ENCODE measurements at regions of chr4 and their contacts with region 1.

Region 1: DNA sequence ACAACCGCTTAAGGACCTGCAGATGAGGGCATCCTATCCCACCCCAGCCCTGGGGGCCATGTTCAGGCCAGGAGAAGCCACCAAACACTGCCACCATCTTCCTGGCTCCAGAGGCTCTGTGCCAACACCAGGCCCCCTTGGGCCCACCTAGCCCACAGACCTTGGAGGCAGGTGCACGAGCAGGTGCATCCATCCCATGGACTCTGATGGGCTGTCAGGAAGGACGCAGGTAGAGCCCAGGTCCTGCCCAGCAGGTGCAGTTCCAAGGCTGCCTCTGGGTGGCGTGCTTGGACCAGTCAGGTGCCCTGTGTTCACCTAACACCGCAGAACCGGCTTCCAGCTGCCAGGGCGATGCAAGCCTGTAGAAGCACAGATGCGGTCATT is 22.8 kb upstream of the PDE6B start:
- DNase-seq: peak; percentile 61 to 73 (median 67)
- ATAC-seq: peak; percentile 99
- H3K4me3 ChIP-seq: no peak overlapping the region
- H3K27ac ChIP-seq: no peak overlapping the region
- H3K4me1 ChIP-seq: peaks cover 0 to 8% of the 10 kb centered on the region in 2 experiments; a peak in 2 of 5 replicates
- H3K27me3 ChIP-seq: peaks cover 4 to 45% of the 10 kb centered on the region in 2 experiments; a peak in 2 of 5 replicates
- CTCF ChIP-seq: peak; percentile 71 to 84 (median 81)
- EP300 ChIP-seq: no peak
- POLR2A ChIP-seq: no peak
- RAD21 ChIP-seq: peak in 1 of 2 experiments; percentile 66; a peak in 2 of 4 replicates

Region 2: DNA sequence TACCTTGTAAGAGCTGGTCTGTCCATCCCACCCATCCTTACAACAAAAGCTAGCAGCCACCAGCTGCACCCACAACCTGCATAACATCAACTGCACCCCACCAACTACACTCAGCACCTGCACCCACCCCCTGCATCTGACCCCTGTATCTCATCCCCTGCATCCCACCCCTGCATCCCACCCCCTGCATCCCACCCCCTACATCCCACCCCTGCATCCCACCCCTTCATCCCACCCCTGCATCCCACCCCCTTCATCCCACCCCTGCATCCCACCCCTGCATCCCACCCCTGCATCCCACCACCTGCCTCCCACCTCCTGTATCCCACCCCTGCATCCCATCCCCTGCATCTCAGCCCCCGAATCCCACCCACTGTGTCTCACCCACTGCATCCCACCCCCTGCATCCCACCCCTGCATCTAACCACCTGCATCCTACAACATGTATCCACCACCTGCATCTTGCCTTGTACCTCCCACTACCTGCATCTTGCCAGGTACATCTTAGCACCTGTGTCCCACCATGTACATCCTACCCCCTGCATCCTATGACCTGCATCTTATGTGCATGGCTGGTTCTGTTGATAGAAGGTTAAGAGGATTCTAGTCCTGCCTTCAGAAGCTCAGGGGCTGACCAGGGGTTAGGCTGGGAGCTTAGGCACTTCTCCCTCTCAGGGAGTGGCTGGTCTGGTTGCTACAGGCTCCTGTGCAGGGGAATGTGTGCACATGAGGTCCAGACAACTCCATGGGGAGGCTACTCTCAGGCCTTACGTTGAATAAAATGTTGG is 35.8 kb before region 1 on chr4:
- CTCF ChIA-PET with region 1: no interaction called
- POLR2A ChIA-PET with region 1: no interaction called
- in situ Hi-C with region 1: no loop called
- intact Hi-C with region 1: no loop called
- DNase-seq: peak in 3 of 4 experiments; percentile 44 to 52 (median 51)
- ATAC-seq: no peak
- H3K4me3 ChIP-seq: no peak overlapping the region
- H3K27ac ChIP-seq: no peak overlapping the region
- H3K4me1 ChIP-seq: no peaks in the 10 kb centered on the region; a peak in 1 of 5 replicates
- H3K27me3 ChIP-seq: peaks cover 0 to 15% of the 10 kb centered on the region in 2 experiments; a peak in 2 of 5 replicates
- CTCF ChIP-seq: no peak
- EP300 ChIP-seq: no peak
- POLR2A ChIP-seq: no peak
- RAD21 ChIP-seq: no peak

Region 3: DNA sequence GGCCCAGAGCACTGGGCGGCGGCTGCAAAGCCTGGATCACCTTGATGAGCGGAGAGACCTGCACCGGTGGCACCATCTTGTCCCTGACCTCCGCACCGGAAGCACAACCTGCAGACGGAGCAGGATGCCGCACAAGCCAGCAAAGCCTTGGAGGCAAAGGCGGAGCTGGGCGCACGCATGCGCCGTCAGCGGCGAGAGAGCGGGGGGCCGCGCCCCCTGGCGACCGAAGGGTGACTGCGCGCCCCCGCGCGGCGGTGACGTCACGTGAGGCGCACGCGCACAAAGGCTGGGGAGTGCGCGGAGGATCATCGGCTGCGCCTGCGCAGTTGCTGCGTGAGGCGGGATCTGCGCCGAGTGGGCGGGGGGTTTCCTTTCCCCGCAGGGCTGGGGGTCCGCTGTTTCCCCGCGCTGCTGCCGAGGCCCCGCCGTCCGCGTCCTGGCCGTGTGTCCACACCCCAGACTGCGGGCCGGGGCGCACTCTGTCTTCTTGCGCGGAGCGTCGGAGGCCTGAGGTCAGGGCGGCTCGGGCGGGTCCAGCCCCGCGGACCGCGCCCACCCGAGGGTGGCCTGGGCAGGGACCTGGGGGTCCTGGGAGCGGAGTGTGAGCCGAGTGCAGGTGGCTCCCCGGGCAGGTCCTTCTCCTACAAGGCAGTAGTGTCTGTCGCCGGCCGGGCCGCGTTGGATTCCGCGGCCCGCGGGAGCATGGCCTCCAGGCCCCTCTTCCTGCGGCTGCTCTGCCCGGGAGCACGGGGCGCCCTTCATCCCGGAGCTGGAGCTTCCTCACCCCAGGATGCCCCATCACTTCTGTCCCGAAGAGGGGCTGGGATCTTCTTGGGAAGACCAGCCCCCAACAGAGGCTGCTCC is 71.9 kb after region 1 on chr4 and contains the starts of genes ATP5ME and MYL5:
- CTCF ChIA-PET with region 1: no interaction called
- POLR2A ChIA-PET with region 1: no interaction called
- in situ Hi-C with region 1: no loop called
- intact Hi-C with region 1: loop called (anchors 1 kb)
- DNase-seq: peak; percentile 97 to 100 (median 98)
- ATAC-seq: peak; percentile 91
- H3K4me3 ChIP-seq: peak within 1 kb of the TSS; percentile 97
- H3K27ac ChIP-seq: peak within 1 kb of the TSS; percentile 91
- H3K4me1 ChIP-seq: peaks cover 9 to 61% of the 10 kb centered on the region in 2 experiments
- H3K27me3 ChIP-seq: no peaks in the 10 kb centered on the region
- CTCF ChIP-seq: peak; percentile 92 to 100 (median 99)
- EP300 ChIP-seq: peak; percentile 18; the same call in 1 of the 2 replicates
- POLR2A ChIP-seq: peak; percentile 76
- RAD21 ChIP-seq: peak; percentile 57 to 78
- polyA plus RNA-seq, gene ATP5ME: 2,400 to 2,480 TPM
- polyA plus RNA-seq, gene MYL5: 1.4 TPM

Measured in K562 (cell line).